ENCODE measurements at regions of chr10 and their contacts with region 1.

Region 1: GRCh38 chr10:72048450-72049124 is 39.8 kb downstream of the SPOCK2 start:
- DNase-seq: peak; percentile 93
- ATAC-seq: peak; percentile 98
- H3K4me3 Mint-ChIP-seq: no peak overlapping the region
- H3K27ac Mint-ChIP-seq: no peak overlapping the region
- H3K4me1 Mint-ChIP-seq: peaks cover 10% of the 10 kb centered on the region
- H3K27me3 Mint-ChIP-seq: no peaks in the 10 kb centered on the region

Region 2: DNA sequence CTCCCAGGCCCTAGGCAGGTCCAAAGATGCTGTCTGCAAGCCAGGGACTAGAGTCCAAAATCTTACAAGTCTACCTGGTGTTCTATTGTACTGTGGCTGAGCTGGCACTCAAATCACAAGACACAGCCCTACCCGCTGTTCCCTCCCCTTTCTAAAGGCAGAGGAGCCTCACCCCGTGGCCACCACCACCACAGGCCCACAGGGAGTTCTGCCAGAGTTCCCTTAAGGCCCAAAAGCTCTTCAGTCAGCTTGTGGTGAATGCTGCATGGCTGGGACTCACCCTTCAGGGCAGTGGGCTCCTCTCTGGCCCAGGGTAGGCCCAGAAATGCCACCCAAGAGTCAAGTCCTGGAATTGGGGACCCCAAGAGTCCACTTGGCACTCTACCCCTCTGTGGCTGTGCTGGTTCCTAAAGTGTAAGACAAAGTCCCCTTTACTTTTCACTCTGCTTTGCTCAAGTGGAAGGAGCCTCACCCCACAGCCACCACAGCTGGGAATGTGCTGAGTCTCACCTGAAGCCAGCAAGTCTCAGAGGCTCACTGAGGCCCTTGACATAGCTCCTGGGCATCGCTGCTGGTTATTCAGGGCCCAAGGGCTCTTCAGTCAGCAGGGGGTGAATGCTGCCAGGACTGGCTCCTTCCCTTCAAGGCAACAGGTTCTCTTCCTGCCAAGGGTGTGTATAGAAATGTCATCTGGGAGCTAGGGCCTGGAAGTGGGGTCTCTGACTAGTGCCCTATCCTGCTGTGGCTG is 148.7 kb before region 1 on chr10:
- CTCF ChIA-PET with region 1: interaction called, 25 read pairs
- DNase-seq: no peak
- ATAC-seq: no peak
- H3K4me3 Mint-ChIP-seq: no peak overlapping the region
- H3K27ac Mint-ChIP-seq: no peak overlapping the region
- H3K4me1 Mint-ChIP-seq: no peaks in the 10 kb centered on the region
- H3K27me3 Mint-ChIP-seq: peaks cover 2% of the 10 kb centered on the region

Region 3: GRCh38 chr10:72061491-72061890 is 12.9 kb after region 1 on chr10:
- CTCF ChIA-PET with region 1: interaction called, 38 read pairs
- DNase-seq: no peak
- ATAC-seq: no peak
- H3K4me3 Mint-ChIP-seq: no peak overlapping the region
- H3K27ac Mint-ChIP-seq: no peak overlapping the region
- H3K4me1 Mint-ChIP-seq: no peaks in the 10 kb centered on the region
- H3K27me3 Mint-ChIP-seq: no peaks in the 10 kb centered on the region

Region 4: GRCh38 chr10:72088889-72089575 is 40.4 kb after region 1 on chr10:
- CTCF ChIA-PET with region 1: interaction called, 25 read pairs
- DNase-seq: peak; percentile 72
- ATAC-seq: peak; percentile 41
- H3K4me3 Mint-ChIP-seq: peak overlapping the region; percentile 94
- H3K27ac Mint-ChIP-seq: peak overlapping the region; percentile 98
- H3K4me1 Mint-ChIP-seq: peaks cover 50% of the 10 kb centered on the region
- H3K27me3 Mint-ChIP-seq: no peaks in the 10 kb centered on the region

Region 5: DNA sequence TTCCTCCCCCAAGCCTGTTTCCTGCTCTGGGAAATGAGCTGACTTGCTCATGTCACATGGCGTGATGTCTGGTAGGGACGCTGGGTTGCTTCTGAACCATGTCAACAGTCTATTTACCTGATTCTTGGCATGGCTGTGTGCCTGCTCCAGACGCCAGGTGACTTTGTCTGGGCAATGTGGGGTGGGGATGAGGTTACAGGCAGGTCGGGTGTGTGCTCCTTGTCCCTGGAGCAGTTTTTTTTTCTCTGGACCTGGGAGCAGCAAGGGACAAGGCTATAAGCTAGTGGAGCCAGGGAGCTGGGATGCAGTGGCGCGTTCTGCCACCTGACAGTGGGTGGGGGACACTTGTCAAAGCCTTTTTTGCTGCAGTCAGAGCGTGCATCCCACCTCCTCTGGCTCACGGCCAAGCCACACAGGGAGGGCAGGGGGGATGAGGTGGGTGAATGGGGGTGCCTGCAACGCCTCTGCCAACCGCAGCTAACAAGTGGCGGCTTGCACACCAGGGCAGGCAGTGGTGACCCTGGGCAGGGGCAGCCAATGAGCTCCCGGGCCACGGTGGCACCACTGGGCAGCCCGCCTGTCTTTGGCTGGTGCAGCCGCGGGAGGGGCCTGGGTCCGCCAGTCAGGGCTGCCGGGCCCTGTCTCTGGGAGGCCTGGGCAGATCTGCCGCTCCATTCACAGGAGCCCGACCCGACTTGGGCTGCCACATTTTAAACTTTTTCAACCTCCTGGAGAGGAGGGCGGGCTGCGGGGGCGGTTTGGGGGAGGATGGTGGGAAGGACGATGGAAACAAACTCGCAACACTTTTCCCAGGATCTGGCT is 283.2 kb after region 1 on chr10:
- CTCF ChIA-PET with region 1: interaction called, 110 read pairs
- DNase-seq: peak; percentile 96
- ATAC-seq: peak; percentile 67
- H3K4me3 Mint-ChIP-seq: peak overlapping the region; percentile 54
- H3K27ac Mint-ChIP-seq: peak overlapping the region; percentile 92
- H3K4me1 Mint-ChIP-seq: peaks cover 90% of the 10 kb centered on the region
- H3K27me3 Mint-ChIP-seq: no peaks in the 10 kb centered on the region